CD4-positive, alpha-beta memory T cell (primary cell): ENCODE measurements at regions of chr5 and their contacts with region 1.

Region 1: GRCh38 chr5:32489791-32490582 is 45.4 kb upstream of the ZFR start:
- DNase-seq: peak; percentile 61 to 71 (median 68)
- H3K4me3 ChIP-seq: no peak overlapping the region
- H3K4me3 Mint-ChIP-seq: no peak overlapping the region
- H3K27ac ChIP-seq: no peak overlapping the region
- H3K27ac Mint-ChIP-seq: peak overlapping the region in 1 of 7 donors; percentile 3
- H3K4me1 ChIP-seq: no peaks in the 10 kb centered on the region
- H3K4me1 Mint-ChIP-seq: peaks cover 0 to 6% (median 1%) of the 10 kb centered on the region in 4 donors
- H3K27me3 ChIP-seq: no peaks in the 10 kb centered on the region
- H3K27me3 Mint-ChIP-seq: no peaks in the 10 kb centered on the region

Region 2: DNA sequence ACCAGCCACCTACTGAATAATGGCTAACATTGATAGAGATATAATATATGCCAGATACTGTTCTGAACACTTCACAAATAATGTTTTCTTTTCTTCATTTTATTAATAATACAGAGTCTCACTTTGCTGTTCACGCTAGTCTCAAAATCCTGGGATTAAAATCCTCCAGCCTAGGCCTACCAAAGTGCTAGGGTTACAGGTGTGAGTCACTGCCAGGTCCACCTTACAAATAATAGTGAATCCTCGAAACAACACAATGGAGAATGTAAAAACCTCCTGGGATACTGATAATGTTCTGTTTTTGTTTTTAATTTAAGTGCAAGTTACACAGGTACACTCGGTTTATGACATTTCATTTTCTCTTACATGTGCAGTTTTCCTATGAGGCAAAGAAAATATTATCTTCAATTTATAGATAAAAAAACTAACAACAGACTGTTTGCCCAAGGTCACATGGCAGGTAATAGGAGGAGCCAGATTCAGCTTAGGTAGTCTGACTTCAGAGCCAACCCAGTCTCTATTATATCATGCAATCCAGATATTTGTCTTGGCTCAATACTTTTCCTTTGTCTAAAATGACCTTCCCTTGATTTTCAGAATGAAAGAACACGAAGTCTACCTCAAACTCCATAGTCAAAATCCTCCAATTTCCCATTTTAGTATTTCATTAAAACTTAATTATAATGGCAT is 53.3 kb before region 1 on chr5:
- CTCF ChIA-PET with region 1: interaction called, 11 read pairs
- POLR2A ChIA-PET with region 1: no interaction called
- intact Hi-C with region 1: no loop called
- DNase-seq: no peak
- H3K4me3 ChIP-seq: no peak overlapping the region
- H3K4me3 Mint-ChIP-seq: peak overlapping the region in 2 of 8 donors; percentile 10 to 26
- H3K27ac ChIP-seq: no peak overlapping the region
- H3K27ac Mint-ChIP-seq: no peak overlapping the region
- H3K4me1 ChIP-seq: peaks cover 80% of the 10 kb centered on the region
- H3K4me1 Mint-ChIP-seq: peaks cover 37 to 77% (median 57%) of the 10 kb centered on the region in 4 donors
- H3K27me3 ChIP-seq: no peaks in the 10 kb centered on the region
- H3K27me3 Mint-ChIP-seq: no peaks in the 10 kb centered on the region

Region 3: DNA sequence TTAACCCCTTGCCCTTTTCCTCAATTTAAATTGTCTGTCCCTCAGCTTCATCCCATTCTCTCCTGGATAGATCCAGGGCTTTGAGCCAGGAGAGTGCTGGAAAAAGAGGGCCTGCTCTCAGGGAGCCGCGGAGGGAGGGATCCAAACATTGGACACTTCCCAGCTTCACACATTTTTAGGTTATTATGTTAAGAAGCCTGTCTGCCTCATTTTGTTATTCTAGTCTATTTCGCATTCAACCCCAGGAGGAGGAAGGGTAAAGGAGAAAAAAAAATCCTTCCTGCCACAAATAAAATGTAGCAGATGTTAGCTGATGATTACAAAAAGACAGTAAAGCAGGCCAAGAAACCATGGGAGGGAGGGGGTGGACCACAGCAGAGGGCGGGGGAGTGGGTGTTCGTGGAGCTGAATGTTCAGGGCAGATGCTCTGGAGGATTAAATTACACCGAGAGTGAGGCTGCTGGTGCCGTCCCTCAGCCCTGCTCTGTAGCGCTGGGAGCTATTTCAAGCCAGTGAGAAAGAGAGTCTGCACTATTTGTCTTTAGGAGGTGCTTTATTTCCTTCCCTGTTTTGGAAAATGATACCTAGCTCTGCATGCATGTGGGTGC is 15.1 kb after region 1 on chr5:
- CTCF ChIA-PET with region 1: interaction called, 26 read pairs
- POLR2A ChIA-PET with region 1: no interaction called
- intact Hi-C with region 1: no loop called
- DNase-seq: peak in 1 of 5 donors; percentile 22
- H3K4me3 ChIP-seq: no peak overlapping the region
- H3K4me3 Mint-ChIP-seq: peak overlapping the region in 6 of 8 donors; percentile 3 to 60 (median 30)
- H3K27ac ChIP-seq: no peak overlapping the region
- H3K27ac Mint-ChIP-seq: peak overlapping the region in 6 of 7 donors; percentile 5 to 75 (median 32)
- H3K4me1 ChIP-seq: peaks cover 7% of the 10 kb centered on the region
- H3K4me1 Mint-ChIP-seq: peaks cover 3 to 22% (median 14%) of the 10 kb centered on the region in 4 donors
- H3K27me3 ChIP-seq: no peaks in the 10 kb centered on the region
- H3K27me3 Mint-ChIP-seq: no peaks in the 10 kb centered on the region

Region 4: GRCh38 chr5:32531885-32532520 is 42.0 kb after region 1 on chr5:
- CTCF ChIA-PET with region 1: interaction called, 26 read pairs
- POLR2A ChIA-PET with region 1: interaction called, 7 read pairs
- intact Hi-C with region 1: loop called (anchors 1 kb)
- DNase-seq: peak; percentile 61 to 90 (median 69)
- H3K4me3 ChIP-seq: peak overlapping the region; percentile 42 to 68
- H3K4me3 Mint-ChIP-seq: peak overlapping the region; percentile 87 to 93 (median 90)
- H3K27ac ChIP-seq: peak overlapping the region; percentile 94
- H3K27ac Mint-ChIP-seq: peak overlapping the region; percentile 94 to 99 (median 97)
- H3K4me1 ChIP-seq: peaks cover 58% of the 10 kb centered on the region
- H3K4me1 Mint-ChIP-seq: peaks cover 37 to 66% (median 50%) of the 10 kb centered on the region in 4 donors
- H3K27me3 ChIP-seq: no peaks in the 10 kb centered on the region
- H3K27me3 Mint-ChIP-seq: no peaks in the 10 kb centered on the region

Region 5: DNA sequence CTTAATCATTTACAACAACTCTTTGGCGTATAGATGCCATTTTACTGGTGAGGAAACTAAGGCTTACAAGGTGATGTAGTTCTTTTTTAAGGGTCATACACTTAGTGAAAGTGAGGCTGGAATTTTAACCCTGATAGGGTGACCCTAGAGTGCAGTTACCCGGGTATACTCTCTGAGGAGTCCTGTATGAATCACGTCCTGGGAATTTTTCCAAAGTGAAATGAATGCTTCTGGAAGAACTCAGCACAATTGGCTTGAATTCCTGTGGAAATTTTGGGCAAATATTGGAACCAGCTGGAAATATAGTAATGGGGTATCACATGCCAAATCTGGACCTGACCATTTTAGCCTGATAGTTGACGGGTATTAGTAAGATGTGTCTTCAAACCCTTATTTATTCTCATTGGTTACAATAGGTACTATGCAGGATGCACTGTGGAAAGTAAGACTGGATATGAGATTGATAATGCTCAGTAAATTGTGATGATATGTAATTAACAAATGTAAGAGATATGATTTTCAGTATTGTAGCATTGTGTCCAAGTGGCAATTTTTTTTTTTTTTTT is 110.2 kb after region 1 on chr5:
- CTCF ChIA-PET with region 1: interaction called, 541 read pairs
- POLR2A ChIA-PET with region 1: no interaction called
- intact Hi-C with region 1: no loop called
- DNase-seq: no peak
- H3K4me3 ChIP-seq: no peak overlapping the region
- H3K4me3 Mint-ChIP-seq: no peak overlapping the region
- H3K27ac ChIP-seq: no peak overlapping the region
- H3K27ac Mint-ChIP-seq: peak overlapping the region in 1 of 7 donors; percentile 6
- H3K4me1 ChIP-seq: peaks cover 38% of the 10 kb centered on the region
- H3K4me1 Mint-ChIP-seq: peaks cover 38 to 75% (median 49%) of the 10 kb centered on the region in 4 donors
- H3K27me3 ChIP-seq: no peaks in the 10 kb centered on the region
- H3K27me3 Mint-ChIP-seq: no peaks in the 10 kb centered on the region

Region 6: GRCh38 chr5:32628048-32628803 is 138.2 kb after region 1 on chr5:
- CTCF ChIA-PET with region 1: no interaction called
- POLR2A ChIA-PET with region 1: no interaction called
- intact Hi-C with region 1: no loop called
- DNase-seq: no peak
- H3K4me3 ChIP-seq: no peak overlapping the region
- H3K4me3 Mint-ChIP-seq: no peak overlapping the region
- H3K27ac ChIP-seq: no peak overlapping the region
- H3K27ac Mint-ChIP-seq: no peak overlapping the region
- H3K4me1 ChIP-seq: no peaks in the 10 kb centered on the region
- H3K4me1 Mint-ChIP-seq: no peaks in the 10 kb centered on the region
- H3K27me3 ChIP-seq: no peaks in the 10 kb centered on the region
- H3K27me3 Mint-ChIP-seq: peaks cover 0 to 1% of the 10 kb centered on the region in 2 donors